AG04450 (cell line): ENCODE measurements at regions of chr10 and their contacts with region 1.

Region 1: DNA sequence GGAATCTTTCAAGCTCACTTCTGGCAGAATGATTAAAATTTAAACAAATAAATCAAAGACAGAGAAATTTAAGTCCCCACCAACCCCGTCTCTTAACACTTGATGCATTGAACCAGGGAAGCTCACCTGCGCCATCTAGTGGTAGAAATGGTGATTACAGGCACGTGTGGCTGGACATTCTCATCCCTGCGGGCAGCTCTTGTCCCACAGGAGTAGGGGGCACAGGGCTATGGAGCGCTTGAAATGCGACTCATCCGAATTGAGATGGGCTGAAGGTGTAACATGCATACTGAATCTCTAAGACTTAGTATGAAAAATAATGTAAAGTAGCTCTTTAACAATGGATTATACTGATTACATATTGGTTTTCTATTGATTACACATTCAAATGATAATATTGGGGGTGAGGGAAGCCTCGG is 24.8 kb upstream of the SLIT1 start:
- DNase-seq: peak; percentile 44
- H3K4me3 ChIP-seq: no peak overlapping the region
- H3K27ac ChIP-seq: no peak overlapping the region
- H3K27me3 ChIP-seq: peaks cover 7% of the 10 kb centered on the region
- CTCF ChIP-seq: peak; percentile 96

Region 2: DNA sequence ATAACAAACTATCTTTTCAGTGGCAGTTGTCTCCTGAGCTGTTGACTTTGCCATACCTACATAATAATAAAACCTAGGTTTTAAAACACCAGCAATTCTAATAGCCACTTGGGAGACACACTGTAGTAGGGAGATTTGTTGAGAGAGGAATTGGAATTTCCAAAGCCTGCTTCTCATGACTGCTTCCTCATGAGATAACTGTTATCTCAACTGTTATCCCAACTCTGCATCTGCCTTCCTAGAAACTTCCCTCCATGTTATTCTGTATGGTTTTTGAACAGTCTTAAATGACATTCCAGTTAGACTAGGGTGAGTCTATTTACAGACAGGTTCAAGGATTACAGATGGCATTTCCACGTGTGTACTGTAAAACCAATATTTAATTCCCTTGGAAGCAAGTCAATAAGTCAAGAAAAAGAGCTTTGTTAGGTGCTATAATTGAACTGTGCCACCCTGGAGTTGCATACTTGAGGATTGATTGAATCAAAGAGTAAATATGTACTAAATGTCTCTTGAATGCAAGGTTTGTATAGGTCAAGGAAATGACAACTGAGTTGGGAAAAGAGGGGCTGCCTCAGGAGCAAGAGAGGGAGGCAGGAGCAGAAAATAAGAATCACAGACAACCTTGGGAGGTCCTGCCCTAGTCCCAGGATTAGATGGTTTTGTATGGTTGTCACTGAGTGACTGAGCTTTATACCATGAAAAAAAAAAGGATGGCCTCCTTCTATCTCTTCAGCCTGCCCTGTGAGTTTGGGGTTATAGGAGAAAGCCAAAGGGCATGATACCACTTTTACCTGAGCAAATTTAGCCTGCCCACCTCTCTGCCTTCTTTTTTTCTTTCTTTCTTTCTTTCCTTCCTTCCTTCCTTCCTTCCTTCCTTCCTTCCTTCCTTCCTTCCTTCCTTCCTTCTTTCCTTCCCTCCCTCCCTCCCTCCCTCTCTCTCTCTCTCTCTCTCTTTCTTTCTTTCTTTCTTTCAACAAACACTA is 613.8 kb before region 1 on chr10:
- CTCF ChIA-PET with region 1: no interaction called
- POLR2A ChIA-PET with region 1: no interaction called
- DNase-seq: no peak
- H3K4me3 ChIP-seq: no peak overlapping the region
- H3K27ac ChIP-seq: no peak overlapping the region
- H3K27me3 ChIP-seq: peaks cover 19% of the 10 kb centered on the region
- CTCF ChIP-seq: no peak

Region 3: DNA sequence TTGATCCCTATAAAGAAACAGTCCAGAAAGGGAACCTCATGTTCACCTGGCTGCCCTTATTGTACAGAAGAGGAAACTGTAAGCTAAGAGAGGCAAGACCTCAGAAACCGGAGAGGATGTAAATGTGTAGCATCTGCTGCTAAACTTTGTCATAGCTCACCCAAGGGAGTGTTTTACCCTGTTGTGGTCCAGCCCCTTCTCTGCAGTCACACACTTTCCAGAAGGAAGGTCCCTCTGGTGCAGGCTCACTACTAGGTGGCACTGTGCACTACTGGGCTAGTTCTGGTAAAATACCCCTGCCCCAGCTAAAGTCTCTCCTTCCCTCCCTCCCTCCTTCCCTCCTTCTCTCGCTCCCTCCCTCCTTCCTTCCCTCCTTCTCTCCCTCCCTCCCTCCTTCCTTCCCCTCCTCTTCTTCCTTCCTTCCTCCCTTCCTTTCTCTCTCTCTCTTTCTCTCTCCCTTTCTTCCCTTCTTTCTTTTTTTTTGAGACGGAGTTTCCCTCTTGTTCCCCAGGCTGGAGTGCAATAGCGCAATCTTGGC is 420.9 kb before region 1 on chr10:
- CTCF ChIA-PET with region 1: interaction called, 15 read pairs
- POLR2A ChIA-PET with region 1: no interaction called
- DNase-seq: no peak
- H3K4me3 ChIP-seq: no peak overlapping the region
- H3K27ac ChIP-seq: no peak overlapping the region
- H3K27me3 ChIP-seq: peaks cover 6% of the 10 kb centered on the region
- CTCF ChIP-seq: peak; percentile 81

Region 4: GRCh38 chr10:97072851-97073665 is 137.5 kb before region 1 on chr10:
- CTCF ChIA-PET with region 1: interaction called, 327 read pairs
- POLR2A ChIA-PET with region 1: interaction called, 3 read pairs
- DNase-seq: peak; percentile 46
- H3K4me3 ChIP-seq: no peak overlapping the region
- H3K27ac ChIP-seq: no peak overlapping the region
- H3K27me3 ChIP-seq: peaks cover 36% of the 10 kb centered on the region
- CTCF ChIP-seq: peak; percentile 94

Region 5: DNA sequence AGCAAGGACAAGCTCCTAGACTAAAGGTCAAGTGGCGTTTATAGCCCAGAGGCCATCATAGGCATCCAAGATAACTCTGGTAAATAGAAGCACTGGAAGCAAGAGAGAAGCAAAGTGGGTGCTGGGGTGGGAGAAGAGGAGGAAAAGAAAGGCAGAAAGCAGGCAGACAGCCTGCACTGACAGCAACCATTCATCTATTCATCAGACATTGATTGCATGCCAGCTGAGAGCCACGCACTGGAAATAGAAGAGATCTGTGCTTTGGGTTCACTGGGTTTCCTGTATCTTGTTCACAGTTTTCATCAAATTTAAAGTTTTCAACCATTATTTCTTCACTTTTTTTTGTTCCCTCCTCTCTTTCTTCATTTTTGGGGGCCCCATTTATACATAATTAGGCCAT is 20.1 kb before region 1 on chr10:
- CTCF ChIA-PET with region 1: interaction called, 93 read pairs
- POLR2A ChIA-PET with region 1: no interaction called
- DNase-seq: no peak
- H3K4me3 ChIP-seq: no peak overlapping the region
- H3K27ac ChIP-seq: no peak overlapping the region
- H3K27me3 ChIP-seq: peaks cover 41% of the 10 kb centered on the region
- CTCF ChIP-seq: no peak

Region 6: GRCh38 chr10:97234400-97234799 is 23.8 kb after region 1 on chr10:
- CTCF ChIA-PET with region 1: interaction called, 55 read pairs
- POLR2A ChIA-PET with region 1: no interaction called
- DNase-seq: peak; percentile 21
- H3K4me3 ChIP-seq: no peak overlapping the region
- H3K27ac ChIP-seq: no peak overlapping the region
- H3K27me3 ChIP-seq: no peaks in the 10 kb centered on the region
- CTCF ChIP-seq: peak; percentile 68

Region 7: DNA sequence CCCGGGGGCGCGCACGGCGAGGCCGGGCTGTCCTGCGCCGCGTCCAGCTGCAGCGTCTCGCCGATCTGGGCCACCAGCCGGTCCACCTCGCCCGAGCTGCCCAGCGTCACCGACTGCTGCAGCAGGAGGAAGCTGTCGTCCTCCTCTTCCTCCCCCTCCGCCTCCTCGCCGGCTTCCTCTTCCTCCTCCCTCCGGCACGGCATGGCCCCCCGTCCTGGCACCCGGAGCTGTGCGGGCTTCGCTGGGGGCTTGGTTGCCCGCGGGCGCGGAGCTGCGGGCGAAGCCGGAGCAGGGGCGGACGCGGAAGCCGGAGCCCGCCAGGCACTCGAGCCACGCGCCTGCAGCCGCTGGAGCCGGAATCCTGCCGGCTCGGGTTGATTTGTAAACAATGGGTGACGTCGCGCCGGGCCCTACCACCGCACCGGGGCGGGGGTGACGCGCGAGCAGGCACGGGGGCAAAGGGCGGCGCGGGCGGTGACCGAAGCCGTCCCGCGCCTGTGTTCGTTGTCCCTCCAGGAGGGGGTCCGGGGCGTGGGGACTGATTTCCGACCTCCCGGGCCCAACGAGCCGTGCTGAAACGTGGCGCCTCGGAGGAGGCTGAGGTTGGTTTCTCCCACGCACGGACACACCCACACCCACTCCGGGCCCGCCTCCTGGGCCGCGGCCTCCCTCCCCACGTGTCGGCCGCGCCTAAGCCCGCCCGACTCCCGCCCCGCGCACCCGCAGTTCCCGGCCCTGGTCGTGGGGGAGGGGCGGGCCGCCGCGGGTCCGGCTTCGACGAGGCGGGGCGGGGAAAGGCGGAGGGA is 124.0 kb after region 1 on chr10 and contains the start of gene FRAT2:
- CTCF ChIA-PET with region 1: interaction called, 11 read pairs
- POLR2A ChIA-PET with region 1: no interaction called
- DNase-seq: peak; percentile 74
- H3K4me3 ChIP-seq: peak within 1 kb of the TSS; percentile 75
- H3K27ac ChIP-seq: peak within 1 kb of the TSS; percentile 91
- H3K27me3 ChIP-seq: peaks cover 32% of the 10 kb centered on the region
- CTCF ChIP-seq: no peak
- polyA plus RNA-seq, gene FRAT2: 2.4 and 2.6 TPM in 2 replicates

Region 8: DNA sequence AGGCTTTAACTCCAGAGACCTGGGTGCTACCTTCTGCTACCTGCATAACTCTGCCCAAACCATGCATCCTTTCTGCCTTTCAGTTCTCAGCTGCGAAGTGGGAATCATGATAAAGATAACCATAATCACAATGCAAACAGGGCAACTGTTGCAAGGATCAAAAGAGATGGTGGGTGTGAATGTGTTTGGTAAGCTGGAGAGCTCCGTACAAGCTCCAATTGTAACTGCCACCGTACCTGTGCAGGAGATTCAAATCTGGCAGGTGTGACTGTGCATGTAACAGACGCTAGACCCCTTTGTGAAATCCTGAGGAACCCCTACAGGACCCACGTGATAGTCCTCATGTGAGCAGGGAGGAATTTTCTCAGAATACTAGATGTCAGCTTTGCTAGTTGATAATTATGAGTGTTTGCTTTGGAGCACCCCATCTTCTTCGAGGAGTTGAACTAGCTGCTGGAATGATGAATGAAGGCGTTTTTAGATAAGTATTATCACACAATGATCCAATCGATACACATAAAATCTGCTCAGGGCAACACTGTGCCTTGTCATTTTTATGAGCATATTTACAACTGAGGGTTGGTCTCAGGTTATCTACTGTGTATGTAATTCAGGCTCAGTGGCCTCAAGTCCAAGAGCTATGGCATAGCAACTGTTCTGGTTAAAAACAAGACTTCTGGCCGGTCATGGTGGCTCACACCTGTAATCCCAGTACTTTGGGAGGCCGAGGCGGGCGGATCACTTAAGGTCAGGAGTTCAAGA is 139.4 kb after region 1 on chr10:
- CTCF ChIA-PET with region 1: no interaction called
- POLR2A ChIA-PET with region 1: no interaction called
- DNase-seq: no peak
- H3K4me3 ChIP-seq: no peak overlapping the region
- H3K27ac ChIP-seq: no peak overlapping the region
- H3K27me3 ChIP-seq: no peaks in the 10 kb centered on the region
- CTCF ChIP-seq: no peak

Region 9: GRCh38 chr10:97407211-97407951 is 196.8 kb after region 1 on chr10:
- CTCF ChIA-PET with region 1: no interaction called
- POLR2A ChIA-PET with region 1: no interaction called
- DNase-seq: peak; percentile 57
- H3K4me3 ChIP-seq: no peak overlapping the region
- H3K27ac ChIP-seq: no peak overlapping the region
- H3K27me3 ChIP-seq: no peaks in the 10 kb centered on the region
- CTCF ChIP-seq: peak; percentile 78